ENCODE measurements at regions of chr6 and their contacts with region 1.

Region 1: GRCh38 chr6:28136585-28137504 is 4.8 kb upstream of the ZKSCAN8 start:
- DNase-seq: peak; percentile 74 to 92 (median 88)
- H3K4me3 ChIP-seq: peak overlapping the region; percentile 52 to 97 (median 87)
- H3K27ac ChIP-seq: peak overlapping the region; percentile 48 to 99 (median 94)
- H3K27me3 ChIP-seq: no peaks in the 10 kb centered on the region
- CTCF ChIP-seq: peak in 29 of 56 donors; percentile 6 to 56 (median 27)

Region 2: DNA sequence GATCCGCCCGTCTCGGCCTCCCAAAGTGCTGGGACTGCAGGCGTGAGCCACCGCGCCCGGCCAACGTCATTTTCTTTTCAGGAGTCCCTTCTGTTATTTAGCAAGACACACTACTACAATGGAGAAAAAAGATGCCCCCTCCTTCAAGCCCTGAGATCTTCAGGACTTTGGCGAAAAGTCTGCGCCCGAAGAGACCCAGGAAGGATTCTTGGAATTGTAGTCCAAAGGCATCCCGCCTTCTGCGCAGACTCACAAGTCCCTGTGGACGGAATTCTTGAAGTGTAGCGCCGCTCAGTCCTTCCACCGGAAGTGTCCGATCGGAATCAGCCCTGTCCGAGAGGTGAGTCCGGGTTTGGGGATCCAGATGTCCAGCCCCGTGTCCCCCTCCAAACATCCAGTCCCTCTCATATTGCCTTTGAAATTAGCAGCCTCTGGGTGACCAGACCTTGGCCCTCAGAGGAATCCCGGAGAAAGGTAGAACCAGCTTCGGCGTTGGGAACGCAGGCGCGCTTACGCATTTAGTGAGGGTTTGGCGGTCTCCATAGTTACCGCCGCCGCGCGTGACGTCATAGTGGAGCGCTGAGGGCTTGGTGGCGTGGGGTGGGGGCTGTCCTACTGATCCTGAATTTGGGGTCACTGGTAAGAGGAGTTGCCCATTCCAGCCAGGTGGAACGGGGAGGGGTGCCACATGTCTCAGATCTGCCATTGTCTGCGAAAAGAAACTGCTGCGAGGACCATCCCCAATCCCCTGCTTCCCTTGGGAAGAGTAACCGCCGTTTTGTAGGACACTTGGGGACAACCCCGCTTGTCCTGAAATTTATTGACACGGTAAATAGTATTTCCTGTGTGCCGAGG is 56.0 kb before region 1 on chr6:
- intact Hi-C with region 1: loop called (anchors 2 to 10 kb)
- DNase-seq: peak; percentile 85 to 95 (median 92)
- H3K4me3 ChIP-seq: peak overlapping the region; percentile 61 to 96 (median 83)
- H3K27ac ChIP-seq: peak overlapping the region; percentile 27 to 98 (median 87)
- H3K27me3 ChIP-seq: no peaks in the 10 kb centered on the region
- CTCF ChIP-seq: peak in 30 of 56 donors; percentile 11 to 55 (median 20)

Region 3: GRCh38 chr6:28104392-28105244 is 32.2 kb before region 1 on chr6:
- intact Hi-C with region 1: loop called in 1 of 2 experiments (anchors 1 kb)
- DNase-seq: peak; percentile 62 to 90 (median 82)
- H3K4me3 ChIP-seq: peak overlapping the region; percentile 62 to 97 (median 84)
- H3K27ac ChIP-seq: peak overlapping the region in 57 of 59 donors; percentile 49 to 97 (median 86)
- H3K27me3 ChIP-seq: no peaks in the 10 kb centered on the region
- CTCF ChIP-seq: peak in 54 of 56 donors; percentile 28 to 71 (median 58)

Region 4: GRCh38 chr6:28218271-28219248 is 81.7 kb after region 1 on chr6:
- intact Hi-C with region 1: loop called in 1 of 2 experiments (anchors 5 kb)
- DNase-seq: peak in 8 of 10 donors; percentile 40 to 70 (median 46)
- H3K4me3 ChIP-seq: peak overlapping the region; percentile 25 to 81 (median 60)
- H3K27ac ChIP-seq: peak overlapping the region in 19 of 59 donors; percentile 27 to 78 (median 56)
- H3K27me3 ChIP-seq: peaks cover 0 to 86% (median 44%) of the 10 kb centered on the region in 45 donors
- CTCF ChIP-seq: peak in 2 of 56 donors; percentile 17 to 19

Region 5: DNA sequence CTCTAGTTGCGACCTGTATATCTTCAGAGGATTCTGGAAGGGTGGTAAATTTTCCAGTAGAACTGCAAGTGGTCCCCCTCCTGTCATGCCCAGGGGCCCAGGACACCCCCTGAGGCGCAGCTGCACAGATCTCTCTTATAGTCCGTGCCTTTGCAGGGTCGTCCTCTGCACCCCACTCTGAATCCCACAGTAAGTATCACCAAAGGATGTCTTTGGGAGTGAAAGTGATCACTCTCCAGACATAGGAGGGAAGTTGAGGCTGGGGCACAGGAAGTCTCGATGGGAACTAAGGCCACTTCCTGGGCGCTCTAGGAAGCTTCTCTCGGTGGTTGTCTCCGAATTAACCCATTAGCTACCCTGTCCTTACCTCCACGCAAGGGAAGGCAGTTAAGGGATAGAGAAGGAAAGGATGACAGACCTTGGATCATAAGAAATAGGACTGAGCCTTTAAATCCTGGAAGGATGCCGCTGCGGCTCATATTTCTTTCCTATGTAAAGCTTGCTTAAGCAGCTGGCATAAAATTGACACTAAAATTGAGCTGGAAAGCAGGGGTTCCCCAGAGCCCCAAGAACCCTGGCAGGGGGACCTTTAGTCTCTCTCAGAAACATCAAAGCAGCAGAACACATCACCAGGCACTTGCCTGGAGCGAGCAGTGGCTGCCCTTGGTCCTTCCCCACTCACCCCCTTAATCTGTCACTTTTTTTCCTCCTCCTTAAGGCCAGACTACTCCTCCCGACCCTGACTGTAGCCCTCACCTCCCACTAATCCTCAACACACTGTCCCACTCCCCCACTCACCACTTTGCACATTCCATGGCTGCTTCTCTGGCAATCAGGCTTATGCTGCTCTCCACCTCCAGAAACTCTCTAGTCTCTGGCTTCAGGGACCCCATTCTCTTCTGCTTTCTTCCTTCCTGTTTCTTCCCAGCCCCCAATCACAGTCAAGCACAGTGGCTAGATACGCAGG is 115.4 kb after region 1 on chr6 and contains the start of gene ZKSCAN4:
- intact Hi-C with region 1: loop called in 1 of 2 experiments (anchors 5 kb)
- DNase-seq: peak; percentile 35 to 87 (median 81)
- H3K4me3 ChIP-seq: peak within 1 kb of the TSS; percentile 57 to 100 (median 91)
- H3K27ac ChIP-seq: peak within 1 kb of the TSS in 54 of 59 donors; percentile 1 to 91 (median 66)
- H3K27me3 ChIP-seq: peaks cover 0 to 11% (median 0%) of the 10 kb centered on the region in 45 donors
- CTCF ChIP-seq: peak in 19 of 56 donors; percentile 6 to 41 (median 19)
- total RNA-seq, gene ZKSCAN4: 3.5 to 8.7 (median 6.2) TPM

Region 6: GRCh38 chr6:28355743-28356665 is 219.2 kb after region 1 on chr6:
- intact Hi-C with region 1: loop called (anchors 2 to 5 kb)
- DNase-seq: peak; percentile 44 to 88 (median 77)
- H3K4me3 ChIP-seq: peak overlapping the region; percentile 41 to 89 (median 70)
- H3K27ac ChIP-seq: peak overlapping the region in 58 of 59 donors; percentile 27 to 96 (median 87)
- H3K27me3 ChIP-seq: no peaks in the 10 kb centered on the region
- CTCF ChIP-seq: peak; percentile 62 to 93 (median 82)

Region 7: GRCh38 chr6:28399350-28400121 is 262.7 kb after region 1 on chr6 and contains the start of gene ZSCAN12:
- intact Hi-C with region 1: loop called in 1 of 2 experiments (anchors 5 kb)
- DNase-seq: peak; percentile 68 to 89 (median 84)
- H3K4me3 ChIP-seq: peak within 1 kb of the TSS; percentile 62 to 99 (median 88)
- H3K27ac ChIP-seq: peak within 1 kb of the TSS in 55 of 59 donors; percentile 3 to 91 (median 76)
- H3K27me3 ChIP-seq: no peaks in the 10 kb centered on the region
- CTCF ChIP-seq: peak; percentile 20 to 81 (median 72)
- total RNA-seq, gene ZSCAN12: 5.0 to 10.7 (median 8.0) TPM